K562 (cell line): ENCODE measurements at regions of chr12 and their contacts with region 1.

Region 1: GRCh38 chr12:76064904-76065303 is 19.6 kb downstream of the NAP1L1 start:
- DNase-seq: no peak
- ATAC-seq: no peak
- H3K4me3 ChIP-seq: no peak overlapping the region
- H3K27ac ChIP-seq: no peak overlapping the region
- H3K4me1 ChIP-seq: no peaks in the 10 kb centered on the region; a peak in 1 of 5 replicates
- H3K27me3 ChIP-seq: no peaks in the 10 kb centered on the region
- CTCF ChIP-seq: no peak
- EP300 ChIP-seq: no peak
- POLR2A ChIP-seq: no peak
- RAD21 ChIP-seq: no peak

Region 2: DNA sequence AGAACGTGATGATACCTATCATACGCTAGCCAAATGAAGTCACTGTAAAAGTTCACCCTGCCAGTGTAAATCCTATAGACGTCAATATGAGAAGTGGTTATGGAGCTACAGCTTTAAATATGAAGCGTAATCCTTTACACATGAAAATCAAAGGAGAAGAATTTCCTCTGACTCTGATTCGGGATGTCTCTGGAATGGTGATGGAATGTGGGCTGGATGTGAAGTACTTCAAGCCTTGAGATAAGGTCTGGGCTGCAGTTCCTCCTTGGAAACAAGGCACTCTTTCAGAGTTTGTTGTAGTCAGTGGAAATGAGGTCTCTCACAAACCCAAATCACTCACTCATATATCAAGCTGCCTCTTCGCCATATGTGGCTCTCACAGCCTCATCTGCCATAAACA is 72.7 kb after region 1 on chr12:
- CTCF ChIA-PET with region 1: no interaction called
- POLR2A ChIA-PET with region 1: no interaction called
- in situ Hi-C with region 1: loop called (anchors 5 kb)
- intact Hi-C with region 1: no loop called
- DNase-seq: no peak
- ATAC-seq: no peak
- H3K4me3 ChIP-seq: no peak overlapping the region
- H3K27ac ChIP-seq: no peak overlapping the region
- H3K4me1 ChIP-seq: no peaks in the 10 kb centered on the region
- H3K27me3 ChIP-seq: no peaks in the 10 kb centered on the region
- CTCF ChIP-seq: no peak
- EP300 ChIP-seq: no peak
- POLR2A ChIP-seq: no peak
- RAD21 ChIP-seq: no peak

Region 3: GRCh38 chr12:76455582-76456345 is 390.9 kb after region 1 on chr12:
- CTCF ChIA-PET with region 1: no interaction called
- POLR2A ChIA-PET with region 1: no interaction called
- in situ Hi-C with region 1: no loop called
- intact Hi-C with region 1: loop called (anchors 10 kb)
- DNase-seq: peak; percentile 14 to 66 (median 18)
- ATAC-seq: peak; percentile 94
- H3K4me3 ChIP-seq: no peak overlapping the region
- H3K27ac ChIP-seq: no peak overlapping the region
- H3K4me1 ChIP-seq: no peaks in the 10 kb centered on the region
- H3K27me3 ChIP-seq: no peaks in the 10 kb centered on the region
- CTCF ChIP-seq: peak; percentile 34 to 72 (median 51); a peak in 5 of 6 replicates
- EP300 ChIP-seq: no peak
- POLR2A ChIP-seq: 0 out of 2 replicates have a peak, but pooled peaks have one; percentile 27
- RAD21 ChIP-seq: peak; percentile 71 to 88